AG04449 (cell line): ENCODE measurements at regions of chr2 and their contacts with region 1.

Region 1: GRCh38 chr2:62456721-62457539 is 49.1 kb downstream of the TMEM17 start:
- DNase-seq: no peak
- H3K4me3 ChIP-seq: peak overlapping the region; percentile 61
- CTCF ChIP-seq: peak; percentile 94

Region 2: DNA sequence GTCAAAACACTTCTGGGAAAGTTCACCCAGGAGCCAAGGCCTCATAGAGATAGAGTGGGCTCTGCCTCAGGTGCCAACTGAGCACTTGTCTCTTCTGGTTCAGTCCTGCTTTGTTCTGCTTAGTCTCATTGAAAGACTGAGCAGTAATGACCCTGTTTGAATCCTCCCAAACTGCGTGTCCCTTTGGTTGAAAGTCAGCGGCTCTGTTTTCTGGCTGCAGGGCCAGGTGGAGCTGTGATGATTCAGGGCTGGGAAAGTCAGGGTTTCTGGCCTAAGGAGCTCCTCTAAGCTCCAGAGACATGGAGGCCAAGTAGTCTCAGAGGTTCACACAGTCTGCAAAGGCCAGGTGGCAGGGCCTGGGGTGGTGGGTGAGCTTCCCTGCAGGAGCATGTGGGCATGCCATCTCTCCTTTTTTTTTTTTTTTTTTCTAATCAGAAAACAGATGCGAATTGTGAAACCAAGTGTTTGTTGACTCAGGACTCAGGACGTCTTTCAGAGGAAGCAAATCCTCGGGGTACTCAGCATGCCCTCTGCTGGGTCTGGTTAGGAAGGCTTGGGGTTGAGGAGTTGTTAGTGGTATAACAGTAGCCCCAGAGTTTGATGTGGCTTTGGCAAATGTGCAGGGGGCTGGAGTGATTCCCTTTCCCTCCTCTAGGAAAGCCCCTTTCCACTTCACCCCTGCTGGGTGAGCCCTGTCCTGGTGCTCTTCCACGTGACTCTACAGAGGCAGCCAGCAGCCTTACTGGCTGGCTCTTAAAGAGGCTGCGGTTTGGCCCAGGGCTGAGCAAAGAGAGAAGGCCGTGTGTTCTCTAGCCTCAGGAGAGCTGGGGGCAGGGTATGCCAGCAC is 10.8 kb after region 1 on chr2:
- CTCF ChIA-PET with region 1: interaction called, 29 read pairs
- POLR2A ChIA-PET with region 1: no interaction called
- DNase-seq: no peak
- H3K4me3 ChIP-seq: no peak overlapping the region
- CTCF ChIP-seq: no peak

Region 3: GRCh38 chr2:62596061-62596921 is 139.4 kb after region 1 on chr2:
- CTCF ChIA-PET with region 1: interaction called, 14 read pairs
- POLR2A ChIA-PET with region 1: no interaction called
- DNase-seq: peak; percentile 89
- H3K4me3 ChIP-seq: no peak overlapping the region
- CTCF ChIP-seq: no peak

Region 4: GRCh38 chr2:62672601-62673000 is 215.7 kb after region 1 on chr2:
- CTCF ChIA-PET with region 1: interaction called, 14 read pairs
- POLR2A ChIA-PET with region 1: no interaction called
- DNase-seq: peak; percentile 73
- H3K4me3 ChIP-seq: no peak overlapping the region
- CTCF ChIP-seq: no peak

Region 5: DNA sequence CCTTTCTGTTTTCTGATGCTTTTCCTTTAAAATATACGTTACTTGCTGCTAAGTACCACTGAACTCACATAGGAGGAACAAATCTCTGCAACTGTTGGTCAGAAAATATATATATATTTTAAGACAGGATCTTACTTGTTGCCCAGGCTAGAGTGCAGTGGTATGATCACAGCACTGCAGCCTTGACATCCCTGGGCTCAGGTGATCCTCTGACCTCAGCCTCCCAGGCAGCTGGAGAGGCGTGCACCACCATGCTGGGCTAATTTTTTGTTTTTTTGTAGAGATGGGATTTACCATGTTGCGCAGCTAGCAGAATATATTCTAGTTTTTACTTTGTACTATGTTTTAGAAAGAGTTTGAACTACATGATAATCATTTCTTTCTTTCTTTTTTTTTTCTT is 300.1 kb after region 1 on chr2:
- CTCF ChIA-PET with region 1: interaction called, 13 read pairs
- POLR2A ChIA-PET with region 1: no interaction called
- DNase-seq: no peak
- H3K4me3 ChIP-seq: no peak overlapping the region
- CTCF ChIP-seq: no peak